Dendritic cell treated with granulocyte-macrophage colony-stimulating factor and Interleukin-4, amounts not matched to agents 40 ng/mL and 50 ng/mL, for 4 days (primary cell): ENCODE measurements at regions of chr6 and their contacts with region 1.

Region 1: DNA sequence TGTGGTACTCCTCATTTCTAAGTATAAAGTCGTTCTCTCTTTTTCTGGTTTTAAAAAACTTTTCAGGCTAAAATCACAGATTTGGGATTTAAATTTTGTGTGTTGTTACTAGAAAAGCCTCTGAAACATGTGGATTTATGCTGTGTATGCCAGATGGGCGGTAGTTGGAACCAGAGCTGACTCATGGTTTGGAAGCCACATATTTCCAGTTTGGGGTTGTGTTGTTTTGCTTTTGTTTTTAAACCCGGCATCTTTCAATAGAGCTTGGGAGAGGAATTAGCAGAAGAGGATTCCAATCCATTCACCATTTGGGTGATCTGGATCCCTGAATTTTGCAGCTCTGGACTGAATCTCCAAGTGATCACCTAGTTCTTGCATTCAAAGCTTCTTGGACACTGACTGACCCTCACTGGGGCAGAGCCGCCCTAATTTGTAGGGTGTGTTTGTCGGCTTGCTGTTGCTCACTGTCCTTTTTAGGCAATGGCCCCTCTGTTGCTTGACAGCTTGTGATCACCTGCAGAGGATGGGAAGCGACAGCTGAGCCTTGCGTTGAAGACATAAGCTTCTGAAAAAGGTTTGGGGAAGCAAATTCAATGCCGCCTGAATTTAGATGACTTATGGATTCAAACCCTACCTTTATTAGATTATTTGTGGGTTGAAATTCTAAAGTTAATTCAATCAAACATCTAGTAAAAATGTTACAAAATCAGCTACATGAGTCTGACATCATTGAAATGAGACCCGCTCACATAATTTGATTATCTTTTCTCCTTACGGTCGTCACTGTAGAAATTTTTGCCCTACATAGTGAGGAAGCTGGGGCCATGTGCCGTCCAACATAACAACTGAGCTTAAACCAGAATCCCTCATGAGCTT is 79.9 kb upstream of the CD83 start:
- H3K4me3 Mint-ChIP-seq: no peak overlapping the region
- H3K27ac Mint-ChIP-seq: no peak overlapping the region
- H3K4me1 Mint-ChIP-seq: peaks cover 8% of the 10 kb centered on the region
- H3K27me3 Mint-ChIP-seq: peaks cover 16% of the 10 kb centered on the region

Region 2: GRCh38 chr6:13924146-13924948 is 113.3 kb before region 1 on chr6:
- intact Hi-C with region 1: loop called (anchors 5 kb)
- H3K4me3 Mint-ChIP-seq: peak overlapping the region; percentile 65
- H3K27ac Mint-ChIP-seq: peak overlapping the region; percentile 54
- H3K4me1 Mint-ChIP-seq: peaks cover 16% of the 10 kb centered on the region
- H3K27me3 Mint-ChIP-seq: peaks cover 65% of the 10 kb centered on the region

Region 3: DNA sequence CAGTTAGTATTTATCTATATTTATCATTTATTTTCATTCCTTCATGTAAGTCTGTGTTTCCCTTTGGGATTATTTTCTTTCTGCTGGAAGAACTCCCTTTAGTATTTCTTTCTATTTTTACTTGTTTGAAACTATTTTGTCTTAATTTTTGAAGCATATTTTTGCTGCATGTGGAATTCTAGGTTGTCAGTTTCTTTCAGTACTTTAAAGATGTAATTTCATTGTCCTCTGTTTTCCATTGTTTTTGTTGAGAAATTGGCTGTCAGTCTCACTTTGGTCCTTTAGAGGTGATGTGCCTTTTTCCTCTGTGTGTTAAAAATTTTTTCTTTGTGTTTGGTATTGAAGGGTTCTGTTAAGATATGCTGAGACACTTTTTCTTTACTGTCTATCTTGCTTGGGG is 95.7 kb before region 1 on chr6:
- intact Hi-C with region 1: no loop called
- H3K4me3 Mint-ChIP-seq: no peak overlapping the region
- H3K27ac Mint-ChIP-seq: no peak overlapping the region
- H3K4me1 Mint-ChIP-seq: no peaks in the 10 kb centered on the region
- H3K27me3 Mint-ChIP-seq: peaks cover 17% of the 10 kb centered on the region

Region 4: GRCh38 chr6:14310960-14311359 is 273.3 kb after region 1 on chr6:
- intact Hi-C with region 1: no loop called
- H3K4me3 Mint-ChIP-seq: no peak overlapping the region
- H3K27ac Mint-ChIP-seq: no peak overlapping the region
- H3K4me1 Mint-ChIP-seq: peaks cover 25% of the 10 kb centered on the region
- H3K27me3 Mint-ChIP-seq: no peaks in the 10 kb centered on the region